ENCODE measurements at regions of chr14 and their contacts with region 1.

Region 1: DNA sequence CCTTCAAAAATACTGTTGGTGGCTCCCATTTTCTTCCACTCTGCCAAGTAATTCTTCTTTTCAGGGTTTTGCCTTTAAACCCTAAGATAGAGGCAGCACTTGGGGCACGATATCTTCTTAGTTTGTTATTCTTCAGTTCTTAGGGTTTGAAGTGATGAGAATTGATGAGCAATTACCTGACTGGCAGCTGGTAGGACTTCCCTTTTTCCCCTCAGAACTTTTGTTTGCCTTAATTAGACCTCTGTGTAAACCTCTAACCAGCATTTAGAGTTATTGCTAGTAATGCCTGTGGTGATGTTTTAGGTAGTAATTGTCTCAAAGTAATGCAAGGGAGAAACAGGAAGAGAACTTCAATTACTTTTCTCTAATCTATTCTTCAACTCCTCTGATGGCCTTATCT is 683.5 kb downstream of the RPL10L start:
- DNase-seq: no peak

Region 2: GRCh38 chr14:45144658-45145057 is 823.4 kb before region 1 on chr14:
- intact Hi-C with region 1: no loop called
- DNase-seq: no peak

Region 3: DNA sequence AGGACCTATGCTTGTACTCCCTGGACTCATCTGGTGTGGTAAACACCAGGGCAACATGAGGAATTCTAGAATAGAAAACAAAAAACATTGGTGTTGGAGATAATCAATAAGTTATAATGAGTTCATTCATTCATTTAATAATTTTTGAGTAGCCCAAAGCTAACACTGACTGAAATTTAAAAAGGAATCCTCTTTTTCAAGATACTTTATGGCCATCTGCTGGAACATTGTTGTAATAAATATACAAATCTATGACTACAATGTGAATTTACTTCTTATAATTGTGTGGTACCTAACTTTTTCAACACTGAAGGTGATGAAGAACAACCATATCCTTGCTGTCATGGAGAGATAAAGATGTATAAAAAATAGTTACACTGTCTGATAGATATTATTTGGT is 27.7 kb before region 1 on chr14:
- intact Hi-C with region 1: loop called in 1 of 2 experiments (anchors 2 kb)
- DNase-seq: no peak

Measured in posterior vena cava (tissue), 2 donors.